Activated B cell treated with CpG ODN at 0.5 μM for 24 hours (primary cell): ENCODE measurements at regions of chr9 and their contacts with region 1.

Region 1: DNA sequence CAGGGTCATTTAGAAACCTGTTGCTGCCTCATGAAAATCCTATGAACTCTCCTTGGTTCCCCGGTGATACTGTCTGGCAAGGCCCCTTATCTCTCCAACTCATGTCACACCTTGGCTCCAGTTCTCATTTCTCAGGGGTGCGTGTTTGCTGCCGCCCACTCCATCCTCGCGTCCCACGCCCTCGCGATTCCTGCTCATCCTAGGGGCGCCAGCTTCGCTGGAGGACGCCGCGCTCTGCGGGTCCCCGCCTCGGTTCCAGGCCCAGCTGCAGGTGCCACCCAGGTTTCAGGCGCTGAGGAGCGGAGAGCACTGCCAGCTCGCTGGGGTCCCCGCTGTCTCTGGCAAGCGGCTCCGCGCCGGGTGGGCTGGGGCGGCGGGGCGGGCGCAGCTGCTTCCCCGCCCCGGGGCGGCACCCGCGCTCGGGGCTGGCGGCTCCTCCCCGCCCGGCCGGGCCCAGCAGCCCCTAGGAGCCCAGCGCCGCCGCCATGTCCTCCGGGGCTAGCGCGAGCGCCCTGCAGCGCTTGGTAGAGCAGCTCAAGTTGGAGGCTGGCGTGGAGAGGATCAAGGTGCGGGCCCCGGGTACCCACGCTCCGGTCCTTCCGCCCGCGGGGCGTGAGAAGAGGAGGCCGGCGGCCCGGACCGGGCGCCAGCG is at the start of gene GNG10:
- DNase-seq: peak; percentile 76
- ATAC-seq: peak; percentile 96
- H3K4me3 Mint-ChIP-seq: peak within 1 kb of the TSS; percentile 95
- H3K27ac Mint-ChIP-seq: peak within 1 kb of the TSS; percentile 85
- H3K4me1 Mint-ChIP-seq: peaks cover 27% of the 10 kb centered on the region
- H3K27me3 Mint-ChIP-seq: no peaks in the 10 kb centered on the region
- CTCF ChIP-seq: no peak
- total RNA-seq, gene GNG10: 9.3 and 10.2 TPM in 2 replicates

Region 2: DNA sequence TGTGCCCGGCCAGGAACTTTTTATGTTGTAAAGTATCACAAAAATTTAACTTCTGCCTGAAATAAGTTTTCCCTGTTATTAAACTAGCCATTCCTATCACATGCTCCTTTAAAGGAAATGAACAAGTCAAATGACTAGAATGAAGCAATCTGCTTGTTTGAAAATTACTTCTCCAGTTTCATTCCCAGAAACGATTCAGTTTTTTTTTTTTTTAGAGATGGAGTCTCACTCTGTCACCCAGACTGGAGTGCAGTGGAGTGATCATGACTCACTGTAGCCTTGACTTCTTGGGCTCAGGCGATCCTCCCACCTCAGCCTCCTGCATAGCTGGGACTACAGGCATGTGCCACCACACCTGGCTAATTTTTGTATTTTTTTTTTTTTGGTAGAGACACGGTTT is 13.2 kb before region 1 on chr9:
- CTCF ChIA-PET with region 1: no interaction called
- POLR2A ChIA-PET with region 1: interaction called, 10 read pairs
- intact Hi-C with region 1: no loop called
- DNase-seq: no peak
- ATAC-seq: no peak
- H3K4me3 Mint-ChIP-seq: no peak overlapping the region
- H3K27ac Mint-ChIP-seq: no peak overlapping the region
- H3K4me1 Mint-ChIP-seq: no peaks in the 10 kb centered on the region
- H3K27me3 Mint-ChIP-seq: no peaks in the 10 kb centered on the region
- CTCF ChIP-seq: no peak

Region 3: DNA sequence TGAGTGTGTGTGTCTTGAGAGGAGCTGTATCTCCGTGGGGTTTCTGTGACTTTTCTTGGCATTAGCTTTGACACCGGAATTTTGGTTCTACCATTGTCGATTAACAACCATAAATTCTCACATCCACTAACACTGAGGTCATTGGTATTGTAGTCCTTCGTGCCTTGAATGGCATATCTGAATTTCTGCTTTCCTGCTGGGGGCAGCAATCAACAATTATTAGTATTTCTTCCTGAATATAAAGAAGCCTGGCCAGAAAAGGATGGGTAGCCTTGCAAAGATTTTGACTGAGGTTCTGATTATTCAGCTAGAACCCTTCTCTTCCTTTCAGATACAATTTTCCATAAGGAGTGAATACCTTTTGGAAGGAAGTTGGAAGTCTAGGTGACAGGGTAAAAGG is 166.9 kb after region 1 on chr9:
- CTCF ChIA-PET with region 1: no interaction called
- POLR2A ChIA-PET with region 1: no interaction called
- intact Hi-C with region 1: no loop called
- DNase-seq: no peak
- ATAC-seq: no peak
- H3K4me3 Mint-ChIP-seq: no peak overlapping the region
- H3K27ac Mint-ChIP-seq: no peak overlapping the region
- H3K4me1 Mint-ChIP-seq: peaks cover 10% of the 10 kb centered on the region
- H3K27me3 Mint-ChIP-seq: no peaks in the 10 kb centered on the region
- CTCF ChIP-seq: no peak